SK-N-SH (cell line): ENCODE measurements at regions of chr15 and their contacts with region 1.

Region 1: GRCh38 chr15:64209680-64210334 is 47.0 kb upstream of the PPIB start:
- DNase-seq: peak; percentile 41
- H3K4me3 ChIP-seq: no peak overlapping the region
- H3K27ac ChIP-seq: peak overlapping the region in 1 of 2 experiments; percentile 19; a peak in 1 of 4 replicates
- H3K4me1 ChIP-seq: peaks cover 2 to 8% of the 10 kb centered on the region in 2 experiments; a peak in 3 of 4 replicates
- H3K27me3 ChIP-seq: no peaks in the 10 kb centered on the region
- CTCF ChIP-seq: peak; percentile 77
- EP300 ChIP-seq: no peak
- RAD21 ChIP-seq: peak; percentile 79

Region 2: DNA sequence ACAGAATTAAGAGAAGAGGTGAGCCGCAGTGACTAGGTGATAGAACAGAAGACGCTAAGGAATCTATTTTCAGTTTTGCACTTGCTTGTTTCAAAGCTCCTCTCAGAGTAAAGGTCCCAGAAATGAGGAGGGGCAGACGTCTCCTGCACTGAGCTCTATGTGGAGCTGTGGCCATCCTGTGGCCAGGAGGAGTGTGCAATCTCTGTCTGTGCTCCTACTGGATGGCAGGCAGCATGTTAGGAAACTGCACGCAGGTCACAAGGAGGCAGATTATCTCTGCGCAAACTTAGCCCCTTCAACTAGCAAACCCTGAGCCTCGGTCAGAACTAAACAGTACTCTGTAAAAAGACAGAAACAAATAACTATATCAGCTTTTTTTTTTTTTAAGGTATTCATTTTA is 15.8 kb before region 1 on chr15:
- CTCF ChIA-PET with region 1: interaction called, 13 read pairs
- POLR2A ChIA-PET with region 1: no interaction called
- DNase-seq: no peak
- H3K4me3 ChIP-seq: no peak overlapping the region
- H3K27ac ChIP-seq: no peak overlapping the region
- H3K4me1 ChIP-seq: peaks cover 0 to 8% of the 10 kb centered on the region in 2 experiments; a peak in 1 of 4 replicates
- H3K27me3 ChIP-seq: no peaks in the 10 kb centered on the region
- CTCF ChIP-seq: no peak
- EP300 ChIP-seq: no peak
- RAD21 ChIP-seq: no peak

Region 3: DNA sequence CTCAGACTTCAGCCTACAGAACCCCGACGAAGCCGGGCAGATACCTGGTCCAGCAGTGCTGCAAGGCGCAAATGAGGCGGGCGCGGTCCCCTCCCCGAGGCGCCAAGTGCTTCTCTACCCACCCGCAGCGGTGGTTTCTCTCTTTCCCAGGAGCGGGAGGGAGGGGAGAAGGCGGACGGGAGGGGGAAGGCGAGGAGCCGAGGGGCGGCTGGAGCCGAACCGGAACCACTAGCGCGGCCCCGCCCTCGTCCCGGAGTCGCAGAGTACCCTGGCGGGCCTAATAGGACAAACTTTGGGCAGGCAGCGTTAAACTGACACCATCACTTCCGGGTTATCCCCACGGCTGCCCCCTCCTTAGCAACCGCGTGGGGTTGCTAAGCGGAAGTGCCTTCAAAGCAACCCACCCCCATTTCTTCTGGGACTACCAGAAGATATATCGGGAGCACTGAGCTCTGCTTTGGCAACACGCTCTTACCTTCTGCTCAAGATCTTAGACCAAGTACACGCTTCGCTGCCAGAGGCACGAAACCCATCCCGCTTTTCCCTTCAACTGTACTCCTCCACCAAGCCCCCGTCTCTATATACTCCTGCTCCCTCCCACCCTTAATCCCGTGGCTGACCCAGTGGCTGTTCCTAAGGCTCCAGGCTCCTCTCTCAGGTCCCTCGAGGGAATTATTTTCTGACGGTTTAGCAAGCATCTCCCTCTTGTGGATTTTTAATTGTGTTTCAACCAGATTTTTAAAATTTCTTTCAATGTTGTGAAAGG is 146.3 kb after region 1 on chr15 and contains the start of gene CSNK1G1:
- CTCF ChIA-PET with region 1: interaction called, 10 read pairs
- POLR2A ChIA-PET with region 1: no interaction called
- DNase-seq: peak; percentile 93
- H3K4me3 ChIP-seq: peak within 1 kb of the TSS; percentile 66 to 74
- H3K27ac ChIP-seq: peak within 1 kb of the TSS; percentile 81 to 85
- H3K4me1 ChIP-seq: peaks cover 3 to 5% of the 10 kb centered on the region in 2 experiments; a peak in 3 of 4 replicates
- H3K27me3 ChIP-seq: no peaks in the 10 kb centered on the region
- CTCF ChIP-seq: peak; percentile 68
- EP300 ChIP-seq: no peak
- RAD21 ChIP-seq: peak; percentile 75
- polyA plus RNA-seq, gene CSNK1G1: 10.2 and 14.2 TPM in 2 replicates